ENCODE measurements at regions of chr6 and their contacts with region 1.

Region 1: DNA sequence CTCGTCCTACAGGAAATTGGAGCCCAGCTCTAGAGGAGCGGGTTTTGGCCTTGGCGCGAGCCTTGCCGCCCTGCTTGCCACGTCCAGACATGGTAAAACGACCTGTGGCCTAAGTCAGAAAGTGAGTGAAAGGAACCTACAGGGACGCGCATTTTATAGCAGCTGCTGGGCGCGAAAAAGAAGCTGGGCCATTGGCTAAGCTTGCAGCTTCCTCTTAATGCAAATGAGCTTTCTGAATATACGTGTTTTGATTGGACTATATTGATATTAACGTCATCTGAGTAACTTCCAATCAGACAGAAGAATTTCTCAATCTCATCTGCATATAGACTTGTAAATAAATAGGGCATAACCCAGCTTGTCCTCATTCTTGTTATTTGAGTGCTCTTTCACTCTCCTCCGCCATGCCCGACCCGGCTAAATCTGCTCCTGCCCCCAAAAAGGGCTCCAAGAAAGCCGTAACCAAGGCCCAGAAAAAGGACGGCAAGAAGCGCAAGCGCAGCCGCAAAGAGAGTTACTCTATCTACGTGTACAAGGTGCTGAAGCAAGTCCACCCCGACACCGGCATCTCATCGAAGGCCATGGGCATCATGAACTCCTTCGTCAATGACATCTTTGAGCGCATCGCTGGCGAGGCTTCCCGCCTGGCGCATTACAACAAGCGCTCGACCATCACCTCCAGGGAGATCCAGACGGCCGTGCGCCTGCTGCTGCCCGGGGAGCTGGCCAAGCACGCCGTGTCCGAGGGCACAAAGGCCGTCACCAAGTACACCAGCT is 18.9 kb downstream of the OR2B2 start:
- DNase-seq: peak; percentile 94 to 99
- H3K4me3 ChIP-seq: peak overlapping the region; percentile 80
- H3K27ac ChIP-seq: peak overlapping the region; percentile 73
- H3K4me1 ChIP-seq: peaks cover 15% of the 10 kb centered on the region
- H3K27me3 ChIP-seq: no peaks in the 10 kb centered on the region
- CTCF ChIP-seq: no peak

Region 2: DNA sequence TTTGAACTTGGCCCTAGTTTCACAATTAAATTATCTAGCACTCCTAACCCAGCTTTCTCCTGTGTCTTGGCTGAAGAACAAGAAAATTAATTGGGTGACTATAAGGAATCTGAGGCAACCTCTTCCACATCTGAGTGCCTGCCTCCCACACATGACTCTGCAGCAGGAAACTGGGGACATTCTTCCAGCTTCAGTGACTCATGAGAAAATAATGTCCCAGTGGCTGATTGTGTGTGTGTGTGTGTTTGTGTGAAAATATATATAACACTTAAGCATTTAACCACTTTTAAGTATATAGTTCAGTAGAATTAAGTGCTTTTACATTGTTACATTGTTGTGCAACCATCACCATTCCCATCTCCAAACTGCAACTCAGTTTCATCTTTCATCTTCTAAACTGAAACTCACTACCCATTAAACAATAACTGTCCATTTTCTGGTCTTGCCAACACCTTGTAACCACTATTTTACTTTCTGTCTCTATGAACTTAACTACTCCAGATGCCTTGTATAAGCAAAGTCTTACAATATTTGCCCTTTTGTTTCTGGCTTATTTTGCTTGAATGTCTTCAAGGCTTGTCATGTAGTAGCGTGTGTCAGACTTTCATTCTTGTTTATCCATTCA is 1921.9 kb before region 1 on chr6:
- CTCF ChIA-PET with region 1: interaction called, 18 read pairs
- POLR2A ChIA-PET with region 1: no interaction called
- intact Hi-C with region 1: no loop called
- DNase-seq: peak; percentile 65 to 90
- H3K4me3 ChIP-seq: 0 out of 2 replicates have a peak overlapping the region, but pooled peaks have one; percentile 2
- H3K27ac ChIP-seq: peak overlapping the region; percentile 84
- H3K4me1 ChIP-seq: peaks cover 35% of the 10 kb centered on the region
- H3K27me3 ChIP-seq: no peaks in the 10 kb centered on the region
- CTCF ChIP-seq: no peak

Region 3: DNA sequence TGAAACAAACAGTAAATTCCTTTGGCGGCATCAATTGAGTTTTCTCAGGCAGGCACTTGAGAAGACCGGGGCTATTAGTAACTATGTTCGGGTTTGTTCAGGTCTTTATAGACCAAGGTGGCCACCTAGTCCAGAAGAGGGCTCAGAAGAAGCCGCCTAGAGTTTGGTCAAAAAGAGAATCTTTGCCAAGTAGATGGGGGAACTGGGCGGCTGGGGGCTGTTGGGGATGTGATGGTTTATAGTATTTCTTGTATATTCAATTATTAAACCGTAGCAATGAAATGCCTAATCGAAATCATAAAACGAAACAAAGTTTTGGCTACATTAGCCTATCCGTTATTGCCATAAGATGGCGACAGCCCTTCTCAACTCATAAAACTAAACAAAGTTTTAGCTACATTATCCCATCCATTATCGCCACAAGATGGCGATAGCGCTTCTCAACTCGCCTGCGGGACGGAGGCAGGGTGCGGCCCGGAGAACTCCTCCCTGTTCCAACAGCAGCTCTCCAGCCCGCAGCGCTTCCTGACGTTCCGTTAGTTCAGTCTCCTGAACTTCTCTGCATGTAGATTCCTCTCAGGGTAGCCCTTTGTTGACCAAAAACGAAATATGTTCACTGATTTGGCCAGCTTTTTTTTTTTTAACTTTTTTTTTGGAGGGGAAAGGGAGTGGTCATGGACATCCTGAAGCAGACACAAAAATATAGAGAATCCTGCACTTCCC is 766.3 kb before region 1 on chr6:
- CTCF ChIA-PET with region 1: interaction called, 5 read pairs
- POLR2A ChIA-PET with region 1: interaction called, 24 read pairs
- intact Hi-C with region 1: loop called (anchors 1 kb)
- DNase-seq: peak; percentile 72 to 83
- H3K4me3 ChIP-seq: peak overlapping the region; percentile 52
- H3K27ac ChIP-seq: no peak overlapping the region
- H3K4me1 ChIP-seq: peaks cover 12% of the 10 kb centered on the region
- H3K27me3 ChIP-seq: no peaks in the 10 kb centered on the region
- CTCF ChIP-seq: peak; percentile 75

Region 4: GRCh38 chr6:27188885-27189418 is 704.3 kb before region 1 on chr6:
- CTCF ChIA-PET with region 1: no interaction called
- POLR2A ChIA-PET with region 1: interaction called, 6 read pairs
- intact Hi-C with region 1: loop called (anchors 1 kb)
- DNase-seq: peak; percentile 55 to 66
- H3K4me3 ChIP-seq: peak overlapping the region; percentile 87
- H3K27ac ChIP-seq: peak overlapping the region; percentile 57; the same call in 1 of the 2 replicates
- H3K4me1 ChIP-seq: peaks cover 12% of the 10 kb centered on the region
- H3K27me3 ChIP-seq: no peaks in the 10 kb centered on the region
- CTCF ChIP-seq: peak; percentile 88

Region 5: GRCh38 chr6:27242589-27243265 is 650.5 kb before region 1 on chr6:
- CTCF ChIA-PET with region 1: no interaction called
- POLR2A ChIA-PET with region 1: no interaction called
- intact Hi-C with region 1: no loop called
- DNase-seq: no peak
- H3K4me3 ChIP-seq: no peak overlapping the region
- H3K27ac ChIP-seq: no peak overlapping the region
- H3K4me1 ChIP-seq: peaks cover 2% of the 10 kb centered on the region; the same call in 1 of the 2 replicates
- H3K27me3 ChIP-seq: peaks cover 3% of the 10 kb centered on the region; the same call in 1 of the 2 replicates
- CTCF ChIP-seq: no peak

Region 6: GRCh38 chr6:27518881-27519795 is 374.1 kb before region 1 on chr6:
- CTCF ChIA-PET with region 1: no interaction called
- POLR2A ChIA-PET with region 1: no interaction called
- intact Hi-C with region 1: loop called (anchors 1 kb)
- DNase-seq: peak; percentile 72 to 85
- H3K4me3 ChIP-seq: peak overlapping the region; percentile 87
- H3K27ac ChIP-seq: peak overlapping the region; percentile 50
- H3K4me1 ChIP-seq: peaks cover 19% of the 10 kb centered on the region
- H3K27me3 ChIP-seq: no peaks in the 10 kb centered on the region
- CTCF ChIP-seq: peak; percentile 86

Region 7: GRCh38 chr6:27608916-27609883 is 284.0 kb before region 1 on chr6:
- CTCF ChIA-PET with region 1: no interaction called
- POLR2A ChIA-PET with region 1: no interaction called
- intact Hi-C with region 1: no loop called
- DNase-seq: peak; percentile 68 to 71
- H3K4me3 ChIP-seq: no peak overlapping the region
- H3K27ac ChIP-seq: no peak overlapping the region
- H3K4me1 ChIP-seq: 0 out of 2 replicates have a peak, but pooled peaks cover 8% of the 10 kb centered on the region
- H3K27me3 ChIP-seq: no peaks in the 10 kb centered on the region
- CTCF ChIP-seq: peak; percentile 77

Region 8: GRCh38 chr6:27809939-27810767 is 83.1 kb before region 1 on chr6:
- CTCF ChIA-PET with region 1: interaction called, 18 read pairs
- POLR2A ChIA-PET with region 1: interaction called, 64 read pairs
- intact Hi-C with region 1: loop called (anchors 1 kb)
- DNase-seq: peak; percentile 83 to 94
- H3K4me3 ChIP-seq: peak overlapping the region; percentile 72
- H3K27ac ChIP-seq: peak overlapping the region; percentile 70
- H3K4me1 ChIP-seq: peaks cover 38% of the 10 kb centered on the region
- H3K27me3 ChIP-seq: no peaks in the 10 kb centered on the region
- CTCF ChIP-seq: no peak

Region 9: GRCh38 chr6:27871924-27872638 is 21.2 kb before region 1 on chr6:
- CTCF ChIA-PET with region 1: interaction called, 5 read pairs
- POLR2A ChIA-PET with region 1: interaction called, 28 read pairs
- intact Hi-C with region 1: loop called (anchors 1 kb)
- DNase-seq: peak; percentile 83 to 85
- H3K4me3 ChIP-seq: peak overlapping the region; percentile 67
- H3K27ac ChIP-seq: peak overlapping the region; percentile 70
- H3K4me1 ChIP-seq: peaks cover 7% of the 10 kb centered on the region; the same call in 1 of the 2 replicates
- H3K27me3 ChIP-seq: no peaks in the 10 kb centered on the region
- CTCF ChIP-seq: peak; percentile 36; the same call in 1 of the 2 replicates